ENCODE measurements at regions of chr12 and their contacts with region 1.

Region 1: GRCh38 chr12:25130741-25131188 is 64.2 kb downstream of the DNAI7 start:
- DNase-seq: no peak
- H3K4me3 ChIP-seq: no peak overlapping the region
- H3K27ac ChIP-seq: no peak overlapping the region
- H3K4me1 ChIP-seq: no peaks in the 10 kb centered on the region
- H3K27me3 ChIP-seq: no peaks in the 10 kb centered on the region
- CTCF ChIP-seq: peak; percentile 53

Region 2: DNA sequence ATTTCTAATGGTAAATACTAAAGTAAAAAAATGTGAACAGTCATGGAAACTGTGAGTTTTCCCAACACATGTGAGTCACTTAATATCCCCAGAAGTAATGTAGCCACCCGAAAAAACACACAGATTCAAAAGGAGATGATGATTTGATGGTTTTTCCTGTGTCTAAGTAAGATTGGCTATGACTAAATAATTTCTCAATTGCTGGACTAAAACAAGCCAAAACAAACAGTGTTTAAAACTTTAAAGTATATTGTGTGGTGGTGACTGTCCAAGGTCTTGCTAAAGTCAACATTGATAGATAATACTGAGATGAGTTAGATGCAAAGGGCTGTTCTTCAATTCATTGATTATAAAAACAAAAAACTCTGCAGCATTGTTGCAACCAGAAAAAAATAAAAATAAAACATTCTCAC is 1091.6 kb before region 1 on chr12:
- intact Hi-C with region 1: no loop called
- DNase-seq: no peak
- H3K4me3 ChIP-seq: no peak overlapping the region
- H3K27ac ChIP-seq: no peak overlapping the region
- H3K4me1 ChIP-seq: no peaks in the 10 kb centered on the region
- H3K27me3 ChIP-seq: no peaks in the 10 kb centered on the region
- CTCF ChIP-seq: no peak

Region 3: DNA sequence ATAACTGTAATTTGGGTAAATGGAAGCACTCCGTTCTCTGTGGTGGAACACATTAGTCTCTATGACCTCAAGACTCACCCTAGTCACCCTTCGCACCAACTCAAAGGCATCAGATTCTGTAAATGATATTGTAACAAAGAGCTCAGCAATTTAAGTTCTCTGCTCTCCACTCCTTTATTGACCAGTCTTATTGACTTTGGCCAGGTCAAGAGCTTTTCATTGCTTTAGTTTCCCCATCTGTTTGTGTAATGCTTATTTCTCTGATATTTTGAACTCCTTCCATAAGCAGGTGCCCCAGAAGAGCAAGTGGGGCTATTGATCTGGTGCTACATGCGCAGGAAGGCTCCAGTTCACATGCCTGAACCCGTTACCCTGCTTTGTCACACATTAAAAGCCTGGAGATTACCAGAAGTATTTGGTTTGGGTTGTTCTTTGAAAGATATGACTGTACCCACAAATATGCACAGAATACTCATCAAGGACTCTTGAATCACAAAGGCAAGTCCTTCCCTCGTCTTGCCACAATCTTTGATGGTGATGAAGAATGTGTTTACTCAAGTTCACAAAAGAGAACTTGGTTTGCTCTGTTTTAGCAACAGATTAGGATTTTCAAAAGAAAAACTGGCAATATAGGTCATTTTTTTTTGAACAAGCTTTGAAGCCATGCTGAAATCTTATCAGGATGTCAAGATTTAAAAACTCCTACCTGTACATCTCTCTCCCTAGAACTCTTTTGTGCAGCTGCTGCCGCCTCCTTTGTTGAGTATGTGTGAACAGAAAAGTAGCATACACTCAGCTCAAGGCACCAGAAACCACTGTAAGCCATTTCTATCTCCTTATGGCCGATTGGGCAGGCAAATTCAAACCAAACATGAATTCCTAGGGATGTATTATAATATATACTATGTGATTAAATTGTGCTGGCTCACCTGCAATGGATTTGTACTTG is 375.8 kb before region 1 on chr12:
- intact Hi-C with region 1: no loop called
- DNase-seq: no peak
- H3K4me3 ChIP-seq: no peak overlapping the region
- H3K27ac ChIP-seq: no peak overlapping the region
- H3K4me1 ChIP-seq: no peaks in the 10 kb centered on the region
- H3K27me3 ChIP-seq: no peaks in the 10 kb centered on the region
- CTCF ChIP-seq: no peak

Region 4: GRCh38 chr12:24991209-24992049 is 139.3 kb before region 1 on chr12:
- intact Hi-C with region 1: loop called (anchors 2 kb)
- DNase-seq: no peak
- H3K4me3 ChIP-seq: no peak overlapping the region
- H3K27ac ChIP-seq: no peak overlapping the region
- H3K4me1 ChIP-seq: no peaks in the 10 kb centered on the region
- H3K27me3 ChIP-seq: no peaks in the 10 kb centered on the region
- CTCF ChIP-seq: peak; percentile 49

Region 5: GRCh38 chr12:25269701-25270100 is 138.9 kb after region 1 on chr12:
- intact Hi-C with region 1: no loop called
- DNase-seq: no peak
- H3K4me3 ChIP-seq: no peak overlapping the region
- H3K27ac ChIP-seq: no peak overlapping the region
- H3K4me1 ChIP-seq: no peaks in the 10 kb centered on the region
- H3K27me3 ChIP-seq: no peaks in the 10 kb centered on the region
- CTCF ChIP-seq: no peak

Region 6: GRCh38 chr12:25764892-25765291 is 634.1 kb after region 1 on chr12:
- intact Hi-C with region 1: no loop called
- DNase-seq: no peak
- H3K4me3 ChIP-seq: no peak overlapping the region
- H3K27ac ChIP-seq: no peak overlapping the region
- H3K4me1 ChIP-seq: no peaks in the 10 kb centered on the region
- H3K27me3 ChIP-seq: no peaks in the 10 kb centered on the region
- CTCF ChIP-seq: no peak

Measured in colonic mucosa (tissue), 4 donors.